Heart right ventricle (tissue), 16 donors: ENCODE measurements at regions of chr17 and their contacts with region 1.

Region 1: DNA sequence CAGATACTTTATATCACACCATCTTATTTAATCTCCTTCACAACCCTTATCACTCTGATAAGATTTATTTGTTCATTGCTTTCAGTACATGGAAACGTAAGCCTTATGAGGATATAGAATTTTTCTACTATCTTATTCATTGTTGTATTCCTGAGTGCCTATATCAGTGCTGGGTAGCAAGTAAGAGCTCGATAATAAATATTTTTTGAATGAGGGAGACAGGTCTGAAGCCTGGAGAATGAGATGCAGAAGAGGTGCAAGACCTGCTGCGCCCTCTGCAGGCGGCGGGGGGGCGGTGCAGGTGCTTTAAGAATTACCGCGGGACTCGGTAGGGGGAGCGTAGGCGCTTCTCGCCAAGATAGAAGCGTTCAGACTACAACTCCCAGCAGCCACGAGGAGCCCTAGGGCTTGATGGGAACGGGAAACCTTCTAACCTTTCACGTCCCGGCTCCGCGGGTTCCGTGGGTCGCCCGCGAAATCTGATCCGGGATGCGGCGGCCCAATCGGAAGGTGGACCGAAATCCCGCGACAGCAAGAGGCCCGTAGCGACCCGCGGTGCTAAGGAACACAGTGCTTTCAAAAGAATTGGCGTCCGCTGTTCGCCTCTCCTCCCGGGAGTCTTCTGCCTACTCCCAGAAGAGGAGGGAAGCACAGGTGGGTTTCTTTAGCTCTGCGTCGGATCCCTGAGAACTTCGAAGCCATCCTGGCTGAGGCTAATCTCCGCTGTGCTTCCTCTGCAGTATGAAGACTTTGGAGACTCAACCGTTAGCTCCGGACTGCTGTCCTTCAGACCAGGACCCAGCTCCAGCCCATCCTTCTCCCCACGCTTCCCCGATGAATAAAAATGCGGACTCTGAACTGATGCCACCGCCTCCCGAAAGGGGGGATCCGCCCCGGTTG is at the start of gene WRAP53:
- DNase-seq: peak; percentile 94 to 98
- ATAC-seq: peak; percentile 93 to 96 (median 95)
- H3K4me3 ChIP-seq: peak within 1 kb of the TSS; percentile 68 to 97 (median 80)
- H3K27ac ChIP-seq: peak within 1 kb of the TSS; percentile 84 to 97 (median 94)
- H3K4me1 ChIP-seq: peaks cover 6 to 36% (median 25%) of the 10 kb centered on the region in 9 donors
- H3K27me3 ChIP-seq: no peaks in the 10 kb centered on the region
- CTCF ChIP-seq: peak in 8 of 9 donors; percentile 97 to 100 (median 100)
- total RNA-seq, gene WRAP53: 3.8 to 5.8 (median 4.7) TPM

Region 2: DNA sequence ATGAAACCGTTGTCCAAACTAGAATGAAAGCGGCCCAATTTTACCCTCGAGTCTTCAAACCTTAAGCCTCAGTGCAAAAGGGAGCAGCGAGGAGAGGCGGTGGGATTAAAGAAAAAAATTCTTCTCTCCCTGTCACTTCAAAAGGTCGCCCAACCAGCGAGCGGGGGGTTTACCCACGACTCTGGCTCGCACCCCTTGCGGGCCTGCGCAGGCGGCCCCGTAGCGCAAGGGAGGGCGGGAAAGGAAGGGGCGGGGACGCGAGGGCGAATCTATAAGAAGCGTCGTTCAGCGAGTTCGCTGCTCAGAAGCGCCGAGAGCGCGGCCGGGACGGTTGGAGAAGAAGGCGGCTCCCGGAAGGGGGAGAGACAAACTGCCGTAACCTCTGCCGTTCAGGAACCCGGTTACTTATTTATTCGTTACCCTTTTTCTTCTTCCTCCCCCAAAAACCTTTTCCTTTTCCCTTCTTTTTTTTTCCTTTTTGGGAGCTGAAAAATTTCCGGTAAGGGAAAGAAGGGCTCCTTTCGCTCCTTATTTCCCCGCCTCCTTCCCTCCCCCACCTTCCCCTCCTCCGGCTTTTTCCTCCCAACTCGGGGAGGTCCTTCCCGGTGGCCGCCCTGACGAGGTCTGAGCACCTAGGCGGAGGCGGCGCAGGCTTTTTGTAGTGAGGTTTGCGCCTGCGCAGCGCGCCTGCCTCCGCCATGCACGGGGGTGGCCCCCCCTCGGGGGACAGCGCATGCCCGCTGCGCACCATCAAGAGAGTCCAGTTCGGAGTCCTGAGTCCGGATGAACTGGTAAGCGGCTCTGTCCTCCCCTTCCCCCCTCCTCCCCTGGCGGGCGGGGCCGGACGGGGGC is 203.9 kb before region 1 on chr17 and contains the start of gene POLR2A:
- intact Hi-C with region 1: loop called in 1 of 10 experiments (anchors 5 kb)
- DNase-seq: peak; percentile 98 to 99
- ATAC-seq: peak; percentile 84 to 93 (median 88)
- H3K4me3 ChIP-seq: peak within 1 kb of the TSS; percentile 55 to 87 (median 68)
- H3K27ac ChIP-seq: peak within 1 kb of the TSS; percentile 91 to 100 (median 100)
- H3K4me1 ChIP-seq: peaks cover 22 to 78% (median 60%) of the 10 kb centered on the region in 9 donors
- H3K27me3 ChIP-seq: no peaks in the 10 kb centered on the region
- CTCF ChIP-seq: no peak
- total RNA-seq, gene POLR2A: 40.5 to 61.7 (median 48.8) TPM

Region 3: DNA sequence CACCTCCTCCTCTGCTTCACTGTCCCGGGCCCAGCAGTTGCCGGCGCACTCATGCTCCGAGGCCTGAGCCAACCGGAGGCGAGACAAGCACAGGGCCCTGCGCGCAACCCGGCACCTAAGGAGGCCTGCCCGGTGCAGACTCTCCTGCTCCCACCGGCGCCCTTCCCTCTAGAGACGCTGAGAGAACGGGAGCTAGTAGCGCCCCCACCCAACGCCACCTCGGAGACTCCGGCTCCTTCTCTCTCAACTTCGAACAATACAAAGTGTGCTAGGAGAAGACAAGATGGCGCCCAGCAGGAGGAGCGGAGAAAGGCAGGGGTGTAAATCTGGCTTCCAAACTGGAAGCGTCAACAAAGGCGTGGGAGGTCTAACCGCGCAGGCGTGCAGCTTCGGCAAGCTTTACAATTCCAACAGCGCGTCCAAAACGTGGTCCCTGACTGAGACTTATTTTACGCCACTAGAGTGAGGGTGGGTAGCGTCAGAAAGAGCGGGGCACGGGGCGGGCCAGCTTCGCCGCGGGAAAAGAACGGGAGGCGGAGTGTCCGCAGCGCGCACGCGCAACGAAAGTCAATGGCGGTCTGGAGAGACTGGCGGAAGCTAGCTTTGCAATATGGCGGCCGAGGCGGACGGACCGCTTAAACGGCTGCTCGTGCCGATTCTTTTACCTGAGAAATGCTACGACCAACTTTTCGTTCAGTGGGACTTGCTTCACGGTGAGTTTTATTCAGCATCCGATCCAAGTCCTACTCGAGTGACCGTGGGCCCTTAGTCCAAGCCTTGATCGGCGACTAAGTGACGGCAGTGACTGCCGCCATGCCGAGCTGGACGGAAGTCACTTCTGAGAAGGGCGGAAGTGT is 104.7 kb before region 1 on chr17 and contains the start of gene MPDU1:
- intact Hi-C with region 1: loop called in 2 of 10 experiments (anchors 5 kb)
- DNase-seq: peak; percentile 97
- ATAC-seq: peak; percentile 81 to 96 (median 90)
- H3K4me3 ChIP-seq: peak within 1 kb of the TSS; percentile 10 to 75 (median 66)
- H3K27ac ChIP-seq: peak within 1 kb of the TSS; percentile 90 to 97 (median 94)
- H3K4me1 ChIP-seq: peaks cover 9 to 76% (median 48%) of the 10 kb centered on the region in 9 donors
- H3K27me3 ChIP-seq: no peaks in the 10 kb centered on the region
- CTCF ChIP-seq: no peak
- total RNA-seq, gene MPDU1: 20.1 to 39.8 (median 23.5) TPM

Region 4: GRCh38 chr17:7627250-7628121 is 60.7 kb before region 1 on chr17 and contains the start of gene SAT2:
- intact Hi-C with region 1: loop called in 9 of 10 experiments (anchors 2 to 10 kb)
- DNase-seq: peak; percentile 94 to 96
- ATAC-seq: peak; percentile 95 to 99 (median 99)
- H3K4me3 ChIP-seq: peak within 1 kb of the TSS; percentile 59 to 92 (median 76)
- H3K27ac ChIP-seq: peak within 1 kb of the TSS; percentile 85 to 98 (median 92)
- H3K4me1 ChIP-seq: peaks cover 7 to 29% (median 17%) of the 10 kb centered on the region in 9 donors
- H3K27me3 ChIP-seq: no peaks in the 10 kb centered on the region
- CTCF ChIP-seq: no peak
- total RNA-seq, gene SAT2: 45.7 to 83.3 (median 66.0) TPM

Region 5: DNA sequence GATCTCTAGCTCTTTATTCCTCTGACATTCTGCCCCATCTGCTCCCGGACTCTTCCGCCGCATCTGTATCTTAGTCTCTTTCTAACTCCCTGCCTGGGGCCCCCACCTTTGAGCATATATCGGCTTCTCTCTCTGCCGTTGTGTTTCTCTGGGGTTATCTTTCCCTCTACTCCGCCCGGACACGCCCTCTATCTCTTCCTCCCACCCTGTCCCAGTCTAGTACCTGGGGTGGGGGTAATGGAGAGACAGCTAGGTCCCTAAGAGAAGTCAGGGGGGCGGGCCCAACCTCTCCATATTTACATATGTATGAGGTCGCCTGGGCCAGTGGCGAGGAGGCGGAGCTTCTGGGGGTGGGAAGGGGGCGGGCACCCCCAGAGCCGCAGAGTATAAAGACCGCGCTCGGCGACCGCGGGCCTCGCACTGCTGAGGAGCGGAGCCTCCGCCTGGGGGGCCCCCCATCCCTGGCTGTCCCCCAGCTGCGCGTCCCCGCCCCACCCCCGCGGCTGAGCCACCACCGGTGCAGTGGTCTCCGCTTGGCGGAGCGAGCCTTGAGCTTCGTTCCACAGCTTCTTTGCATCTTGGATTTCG is 37.6 kb before region 1 on chr17 and contains the start of gene ATP1B2:
- intact Hi-C with region 1: loop called in 1 of 10 experiments (anchors 5 kb)
- DNase-seq: peak; percentile 68 to 76
- ATAC-seq: peak; percentile 72 to 90 (median 84)
- H3K4me3 ChIP-seq: peak within 1 kb of the TSS; percentile 8 to 66 (median 58)
- H3K27ac ChIP-seq: peak within 1 kb of the TSS; percentile 47 to 78 (median 62)
- H3K4me1 ChIP-seq: peaks cover 6 to 23% (median 19%) of the 10 kb centered on the region in 9 donors
- H3K27me3 ChIP-seq: peaks cover 5 to 50% (median 37%) of the 10 kb centered on the region in 7 donors
- CTCF ChIP-seq: no peak
- total RNA-seq, gene ATP1B2: 1.4 to 6.5 (median 3.9) TPM

Region 6: GRCh38 chr17:7767405-7768021 is 79.4 kb after region 1 on chr17:
- intact Hi-C with region 1: no loop called
- DNase-seq: no peak
- ATAC-seq: no peak
- H3K4me3 ChIP-seq: no peak overlapping the region
- H3K27ac ChIP-seq: no peak overlapping the region
- H3K4me1 ChIP-seq: no peaks in the 10 kb centered on the region
- H3K27me3 ChIP-seq: peaks cover 0 to 15% (median 9%) of the 10 kb centered on the region in 7 donors
- CTCF ChIP-seq: no peak